Activated naive CD8-positive, alpha-beta T cell treated with anti-CD3 and anti-CD28 coated beads, Interleukin-2, amount 10 ng/mL, durations not matched to agents 7 days and 5 days (primary cell): ENCODE measurements at regions of chr17 and their contacts with region 1.

Region 1: GRCh38 chr17:48892940-48893645 is 506 bp downstream of the ATP5MC1 start:
- DNase-seq: no peak
- ATAC-seq: no peak
- H3K4me3 Mint-ChIP-seq: peak overlapping the region; percentile 92
- H3K27ac Mint-ChIP-seq: peak overlapping the region; percentile 86
- H3K4me1 Mint-ChIP-seq: peaks cover 22% of the 10 kb centered on the region
- H3K27me3 Mint-ChIP-seq: no peaks in the 10 kb centered on the region

Region 2: DNA sequence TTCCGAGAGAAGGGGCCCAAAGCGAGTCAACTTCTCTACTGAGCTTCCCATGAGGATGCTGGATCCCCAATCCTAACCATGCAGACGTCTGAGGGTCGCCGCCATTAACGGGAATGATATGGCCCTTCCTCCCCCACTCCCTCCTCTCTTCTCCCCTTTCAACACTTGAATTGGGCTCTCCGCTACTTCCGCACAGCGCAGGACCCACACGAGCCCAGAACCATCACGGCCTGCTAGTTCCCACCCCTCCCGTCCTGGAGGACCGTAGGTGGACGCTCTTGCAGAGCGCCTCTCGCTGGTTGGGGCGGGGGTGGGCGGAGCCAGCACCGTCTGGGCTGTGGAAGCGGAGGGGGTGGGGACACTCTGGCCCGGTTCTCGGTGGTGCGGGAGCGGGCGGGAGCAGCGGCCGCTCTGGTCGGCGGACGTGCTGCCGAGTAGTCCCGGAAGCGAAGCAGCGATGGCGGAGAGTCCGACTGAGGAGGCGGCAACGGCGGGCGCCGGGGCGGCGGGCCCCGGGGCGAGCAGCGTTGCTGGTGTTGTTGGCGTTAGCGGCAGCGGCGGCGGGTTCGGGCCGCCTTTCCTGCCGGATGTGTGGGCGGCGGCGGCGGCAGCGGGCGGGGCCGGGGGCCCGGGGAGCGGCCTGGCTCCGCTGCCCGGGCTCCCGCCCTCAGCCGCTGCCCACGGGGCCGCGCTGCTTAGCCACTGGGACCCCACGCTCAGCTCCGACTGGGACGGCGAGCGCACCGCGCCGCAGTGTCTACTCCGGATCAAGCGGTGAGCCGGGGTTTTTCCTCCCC is 15.2 kb after region 1 on chr17 and contains the start of gene UBE2Z:
- POLR2A ChIA-PET with region 1: interaction called, 65 read pairs
- DNase-seq: peak; percentile 88
- ATAC-seq: peak; percentile 86
- H3K4me3 Mint-ChIP-seq: peak within 1 kb of the TSS; percentile 92
- H3K27ac Mint-ChIP-seq: peak within 1 kb of the TSS; percentile 93
- H3K4me1 Mint-ChIP-seq: peaks cover 40% of the 10 kb centered on the region
- H3K27me3 Mint-ChIP-seq: no peaks in the 10 kb centered on the region
- total RNA-seq, gene UBE2Z: 71.6 to 74.7 TPM